HEK293 (cell line): ENCODE measurements at regions of chr14 and their contacts with region 1.

Region 1: GRCh38 chr14:37172024-37172869 is at the start of gene SLC25A21:
- H3K4me3 ChIP-seq: peak within 1 kb of the TSS; percentile 75
- H3K27ac ChIP-seq: peak within 1 kb of the TSS; percentile 94
- H3K4me1 ChIP-seq: no peaks in the 10 kb centered on the region; the same call in 1 of the 2 replicates
- CTCF ChIP-seq: peak; percentile 36

Region 2: GRCh38 chr14:37056473-37056872 is 115.8 kb before region 1 on chr14:
- CTCF ChIA-PET with region 1: no interaction called
- POLR2A ChIA-PET with region 1: no interaction called
- H3K4me3 ChIP-seq: no peak overlapping the region
- H3K27ac ChIP-seq: no peak overlapping the region
- H3K4me1 ChIP-seq: peaks cover 8% of the 10 kb centered on the region
- CTCF ChIP-seq: no peak

Region 3: GRCh38 chr14:37197421-37198272 is 25.4 kb after region 1 on chr14 and contains the start of gene MIPOL1:
- CTCF ChIA-PET with region 1: interaction called, 4 read pairs
- POLR2A ChIA-PET with region 1: interaction called, 10 read pairs
- H3K4me3 ChIP-seq: peak within 1 kb of the TSS; percentile 75
- H3K27ac ChIP-seq: peak within 1 kb of the TSS; percentile 87
- H3K4me1 ChIP-seq: peaks cover 7% of the 10 kb centered on the region; the same call in 1 of the 2 replicates
- CTCF ChIP-seq: peak; percentile 72